PC-9 (cell line): ENCODE measurements at regions of chr12 and their contacts with region 1.

Region 1: DNA sequence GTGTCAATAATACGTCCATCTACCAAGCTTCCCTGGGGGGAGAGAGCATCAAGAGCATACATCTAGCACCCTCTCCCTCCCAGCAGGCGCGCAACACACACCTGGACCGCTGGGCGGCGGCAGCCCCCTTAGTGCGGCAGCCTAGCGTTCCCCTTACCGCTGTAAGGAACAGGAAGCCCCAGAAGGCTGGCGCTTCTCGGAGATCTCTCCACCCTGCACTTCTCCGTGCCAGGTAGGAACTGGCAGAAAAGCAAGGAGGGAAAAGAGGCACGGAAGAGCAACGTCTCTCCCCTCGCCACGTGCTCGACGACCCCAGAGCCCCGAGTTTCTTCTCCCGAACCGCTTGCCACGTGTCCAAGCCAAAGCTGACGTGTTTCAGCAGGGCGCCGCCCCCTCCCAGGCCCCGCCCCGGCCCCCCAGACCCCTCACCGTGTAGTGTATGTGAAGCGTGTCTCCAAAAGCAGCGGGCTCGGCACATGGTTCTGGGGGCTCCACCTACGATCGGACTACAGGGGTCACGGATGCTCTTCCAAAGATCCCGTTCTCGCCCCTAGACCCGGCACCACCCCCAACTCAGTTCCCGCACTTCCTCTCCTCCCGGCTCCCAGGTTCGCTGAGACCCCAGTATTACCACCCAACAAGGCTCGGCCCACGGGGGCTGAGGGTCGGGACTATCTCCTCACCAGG is 532 bp downstream of the FKBP11 start:
- DNase-seq: peak in 1 of 2 experiments; percentile 23
- H3K4me3 ChIP-seq: peak overlapping the region; percentile 53; the same call in 1 of the 2 replicates
- H3K27ac ChIP-seq: no peak overlapping the region
- H3K4me1 ChIP-seq: no peaks in the 10 kb centered on the region
- H3K27me3 ChIP-seq: no peaks in the 10 kb centered on the region
- CTCF ChIP-seq: peak; percentile 33; the same call in 1 of the 2 replicates

Region 2: GRCh38 chr12:48865434-48866290 is 59.1 kb before region 1 on chr12 and contains the start of gene RND1:
- CTCF ChIA-PET with region 1: interaction called, 10 read pairs
- POLR2A ChIA-PET with region 1: interaction called, 15 read pairs
- intact Hi-C with region 1: no loop called
- DNase-seq: peak; percentile 83 to 87
- H3K4me3 ChIP-seq: peak within 1 kb of the TSS; percentile 56
- H3K27ac ChIP-seq: 0 out of 2 replicates have a peak within 1 kb of the TSS, but pooled peaks have one; percentile 36
- H3K4me1 ChIP-seq: peaks cover 20% of the 10 kb centered on the region
- H3K27me3 ChIP-seq: 0 out of 2 replicates have a peak, but pooled peaks cover 4% of the 10 kb centered on the region
- CTCF ChIP-seq: no peak
- total RNA-seq, gene RND1: 2.7 and 4.0 TPM in 2 replicates

Region 3: GRCh38 chr12:48910196-48910595 is 14.6 kb before region 1 on chr12:
- CTCF ChIA-PET with region 1: interaction called, 10 read pairs
- POLR2A ChIA-PET with region 1: no interaction called
- intact Hi-C with region 1: no loop called
- DNase-seq: no peak
- H3K4me3 ChIP-seq: no peak overlapping the region
- H3K27ac ChIP-seq: no peak overlapping the region
- H3K4me1 ChIP-seq: peaks cover 11% of the 10 kb centered on the region
- H3K27me3 ChIP-seq: no peaks in the 10 kb centered on the region
- CTCF ChIP-seq: no peak

Region 4: DNA sequence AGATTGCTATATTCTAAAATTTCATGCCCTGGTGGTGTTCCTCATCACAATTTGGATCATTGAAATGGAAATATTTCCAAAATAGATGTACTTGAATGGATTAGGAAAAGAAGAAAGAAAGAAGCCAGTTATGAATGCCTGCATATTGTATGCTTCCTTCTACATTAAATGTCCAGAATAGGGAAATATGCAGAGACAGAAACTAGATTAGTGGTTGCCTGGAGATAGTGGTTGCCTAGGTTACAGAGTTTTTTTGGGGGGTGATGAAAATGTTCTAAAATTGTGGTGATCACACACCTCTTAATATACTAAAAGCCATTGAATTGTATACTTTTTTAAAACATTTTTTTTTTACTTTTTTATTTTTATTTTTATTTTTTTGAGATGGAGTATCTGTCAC is 246.2 kb after region 1 on chr12:
- CTCF ChIA-PET with region 1: no interaction called
- POLR2A ChIA-PET with region 1: no interaction called
- intact Hi-C with region 1: no loop called
- DNase-seq: no peak
- H3K4me3 ChIP-seq: no peak overlapping the region
- H3K27ac ChIP-seq: no peak overlapping the region
- H3K4me1 ChIP-seq: no peaks in the 10 kb centered on the region
- H3K27me3 ChIP-seq: no peaks in the 10 kb centered on the region
- CTCF ChIP-seq: no peak

Region 5: DNA sequence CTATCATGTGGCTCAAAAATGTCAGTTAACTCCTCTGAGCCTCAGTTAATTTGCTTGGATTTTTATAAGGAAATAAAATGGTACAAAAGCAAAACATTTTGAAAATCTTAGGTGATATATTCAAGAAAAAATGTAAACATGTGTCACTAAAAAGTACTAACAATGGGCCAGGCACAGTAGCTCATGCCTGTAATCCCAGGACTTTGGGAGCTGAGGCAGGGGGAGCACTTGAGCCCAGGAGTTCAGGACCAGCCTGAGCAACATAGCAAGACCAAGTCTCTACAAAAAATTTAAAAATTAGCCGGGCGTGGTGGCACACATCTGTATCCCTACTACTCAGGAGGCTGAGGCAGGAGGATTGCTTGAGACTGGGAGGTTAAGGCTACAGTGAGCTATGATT is 1073.7 kb after region 1 on chr12:
- CTCF ChIA-PET with region 1: no interaction called
- POLR2A ChIA-PET with region 1: no interaction called
- intact Hi-C with region 1: no loop called
- DNase-seq: no peak
- H3K4me3 ChIP-seq: no peak overlapping the region
- H3K27ac ChIP-seq: no peak overlapping the region
- H3K4me1 ChIP-seq: no peaks in the 10 kb centered on the region
- H3K27me3 ChIP-seq: no peaks in the 10 kb centered on the region
- CTCF ChIP-seq: no peak